GM12878 (cell line): ENCODE measurements at regions of chr19 and their contacts with region 1.

Region 1: GRCh38 chr19:10269333-10270179 is 1.4 kb upstream of the ICAM1 start:
- DNase-seq: no peak
- ATAC-seq: peak; percentile 55
- H3K4me3 ChIP-seq: peak overlapping the region; percentile 92
- H3K27ac ChIP-seq: peak overlapping the region; percentile 98
- H3K4me1 ChIP-seq: no peaks in the 10 kb centered on the region; the same call in 1 of the 2 replicates
- H3K27me3 ChIP-seq: no peaks in the 10 kb centered on the region
- CTCF ChIP-seq: peak; percentile 94 to 99 (median 97); a peak in 5 of 6 replicates
- EP300 ChIP-seq: no peak
- POLR2A ChIP-seq: no peak
- RAD21 ChIP-seq: peak; percentile 95

Region 2: GRCh38 chr19:10180463-10180862 is 89.1 kb before region 1 on chr19:
- CTCF ChIA-PET with region 1: no interaction called
- POLR2A ChIA-PET with region 1: no interaction called
- RAD21 ChIA-PET with region 1: no interaction called
- SMC1A ChIA-PET with region 1: no interaction called
- in situ Hi-C with region 1: no loop called
- intact Hi-C with region 1: no loop called
- DNase-seq: no peak
- ATAC-seq: no peak
- H3K4me3 ChIP-seq: no peak overlapping the region
- H3K27ac ChIP-seq: no peak overlapping the region
- H3K4me1 ChIP-seq: no peaks in the 10 kb centered on the region
- H3K27me3 ChIP-seq: no peaks in the 10 kb centered on the region
- CTCF ChIP-seq: no peak
- EP300 ChIP-seq: no peak
- POLR2A ChIP-seq: no peak
- RAD21 ChIP-seq: no peak

Region 3: DNA sequence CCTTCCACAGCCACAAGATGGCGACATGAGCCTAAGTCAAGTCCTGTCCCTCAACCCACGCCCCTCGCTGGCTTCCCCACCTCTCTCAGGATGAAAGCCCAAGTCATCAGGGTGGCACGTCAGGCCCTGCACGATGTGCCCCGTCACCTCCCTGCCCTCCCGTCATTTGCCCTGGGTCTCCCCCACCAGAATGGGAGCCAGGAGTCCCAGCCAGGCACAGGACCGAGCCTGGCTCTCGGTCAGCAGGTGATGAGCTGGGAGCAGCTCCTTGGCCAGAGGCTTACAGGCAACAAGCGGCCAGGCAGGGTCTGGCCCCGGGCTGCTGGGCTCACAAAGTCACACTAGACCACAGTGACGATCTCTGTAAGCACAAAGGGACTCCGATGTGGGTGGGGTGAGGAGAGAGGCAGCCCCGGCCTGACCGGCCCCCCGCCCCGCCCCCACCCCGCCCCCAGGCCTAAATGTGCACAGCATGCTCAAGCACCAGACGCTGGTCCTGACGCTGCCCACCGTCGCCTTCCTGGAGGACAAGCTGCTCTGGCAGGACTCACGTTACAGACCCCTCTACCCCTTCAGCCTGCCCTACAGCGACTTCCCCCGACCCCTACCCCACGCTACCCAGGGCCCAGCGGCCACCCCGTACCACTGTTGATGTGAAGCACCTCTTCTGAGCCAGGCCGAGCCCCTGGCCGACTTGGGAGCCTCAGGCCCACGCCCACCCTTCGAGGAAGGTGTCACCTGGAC is 10.2 kb before region 1 on chr19:
- CTCF ChIA-PET with region 1: interaction called, 93 read pairs
- POLR2A ChIA-PET with region 1: interaction called, 32 read pairs
- RAD21 ChIA-PET with region 1: interaction called, 68 read pairs
- SMC1A ChIA-PET with region 1: interaction called, 30 read pairs
- in situ Hi-C with region 1: no loop called
- intact Hi-C with region 1: no loop called
- DNase-seq: no peak
- ATAC-seq: peak; percentile 91
- H3K4me3 ChIP-seq: no peak overlapping the region
- H3K27ac ChIP-seq: 0 out of 2 replicates have a peak overlapping the region, but pooled peaks have one; percentile 27
- H3K4me1 ChIP-seq: peaks cover 11% of the 10 kb centered on the region
- H3K27me3 ChIP-seq: no peaks in the 10 kb centered on the region
- CTCF ChIP-seq: peak; percentile 71 to 75 (median 73)
- EP300 ChIP-seq: no peak
- POLR2A ChIP-seq: peak; percentile 72
- RAD21 ChIP-seq: peak; percentile 74

Region 4: DNA sequence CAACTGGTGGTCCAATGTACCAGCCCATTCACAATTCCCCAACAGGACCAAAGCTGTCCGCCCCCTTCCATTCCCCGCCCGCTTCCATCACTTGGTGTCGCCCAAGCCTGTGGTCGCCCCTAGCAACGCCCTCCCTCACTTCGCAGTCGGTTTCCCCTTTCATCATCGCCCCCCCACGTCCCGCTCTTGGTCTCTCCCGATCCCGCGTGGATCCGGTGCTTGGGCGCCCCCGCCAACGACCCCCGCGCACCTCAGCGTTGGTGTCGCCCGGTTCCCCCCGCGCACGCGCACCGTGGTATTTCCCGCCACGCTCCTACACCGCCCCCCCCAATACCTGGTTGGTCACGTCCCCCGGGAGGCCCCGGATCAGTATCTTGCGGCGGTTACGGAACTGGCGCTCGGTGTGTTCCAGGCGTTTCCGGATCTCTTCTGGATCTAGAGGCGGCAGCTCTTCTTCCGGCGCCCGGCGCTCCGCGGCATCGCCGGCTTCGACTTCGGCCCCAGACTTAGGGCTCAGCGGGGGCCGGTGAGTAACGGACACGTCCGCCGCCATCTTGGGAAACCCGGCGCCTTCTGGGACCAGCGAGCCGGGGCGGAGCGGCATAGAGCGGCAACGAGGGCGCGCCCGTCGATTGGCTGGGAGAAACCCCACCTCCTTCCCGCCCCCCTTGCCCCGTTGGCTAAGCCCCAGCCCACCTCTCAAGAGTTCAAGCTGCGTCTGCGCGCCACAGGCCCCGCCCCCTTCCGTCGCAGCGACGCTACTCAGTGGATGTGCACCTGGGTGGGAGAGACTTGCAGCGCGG is 63.6 kb after region 1 on chr19 and contains the start of gene RAVER1:
- CTCF ChIA-PET with region 1: interaction called, 5 read pairs
- POLR2A ChIA-PET with region 1: interaction called, 6 read pairs
- RAD21 ChIA-PET with region 1: interaction called, 15 read pairs
- SMC1A ChIA-PET with region 1: interaction called, 3 read pairs
- in situ Hi-C with region 1: no loop called
- intact Hi-C with region 1: loop called (anchors 5 kb)
- DNase-seq: peak; percentile 87
- ATAC-seq: peak; percentile 98
- H3K4me3 ChIP-seq: peak within 1 kb of the TSS; percentile 100
- H3K27ac ChIP-seq: peak within 1 kb of the TSS; percentile 92
- H3K4me1 ChIP-seq: peaks cover 16% of the 10 kb centered on the region
- H3K27me3 ChIP-seq: no peaks in the 10 kb centered on the region
- CTCF ChIP-seq: no peak
- EP300 ChIP-seq: peak; percentile 10 to 28; a peak in 1 of 4 replicates
- POLR2A ChIP-seq: peak; percentile 96
- RAD21 ChIP-seq: no peak
- polyA plus RNA-seq, gene RAVER1: 0.03 to 0.05 TPM

Region 5: DNA sequence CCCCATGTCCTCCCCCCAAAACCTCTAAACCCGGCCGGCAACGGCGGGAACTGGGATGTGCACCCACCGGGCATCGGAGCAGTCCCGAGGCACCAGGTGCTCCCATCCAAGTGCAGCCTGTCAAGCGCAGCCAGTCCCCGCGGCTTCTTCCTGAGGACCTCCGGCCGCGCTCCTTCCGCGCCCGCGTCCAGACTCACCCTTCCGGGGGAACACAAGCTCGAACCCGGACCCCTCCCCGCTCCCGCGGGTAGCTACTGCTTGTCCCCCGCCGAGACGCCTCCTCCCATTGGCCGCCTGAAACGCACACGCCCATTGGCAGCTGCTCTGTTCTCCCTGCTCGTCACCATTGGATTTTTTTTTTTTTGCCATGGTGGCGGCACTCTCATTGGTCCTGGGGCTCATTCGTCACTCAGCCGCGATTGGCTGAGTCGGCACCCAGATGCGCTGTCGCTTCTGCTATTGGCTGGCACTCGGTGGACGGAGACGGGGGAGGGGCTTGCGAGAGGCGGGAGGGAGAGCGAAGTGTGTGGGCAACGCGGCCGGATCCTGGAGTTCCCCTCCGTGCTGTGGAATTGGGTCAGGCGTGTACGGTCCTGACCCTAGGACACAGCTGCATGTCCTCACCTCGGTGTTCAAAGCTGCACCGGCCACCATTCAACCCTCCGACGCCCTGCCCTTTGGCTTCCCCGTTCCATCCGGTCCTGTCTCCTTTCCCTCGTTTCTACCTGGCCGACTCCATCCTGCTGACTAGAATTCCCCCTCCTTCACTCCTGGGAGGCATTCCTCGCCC is 111.0 kb after region 1 on chr19 and contains the start of gene TYK2:
- CTCF ChIA-PET with region 1: interaction called, 370 read pairs
- POLR2A ChIA-PET with region 1: interaction called, 108 read pairs
- RAD21 ChIA-PET with region 1: interaction called, 206 read pairs
- SMC1A ChIA-PET with region 1: interaction called, 158 read pairs
- in situ Hi-C with region 1: loop called (anchors 5 kb)
- intact Hi-C with region 1: loop called (anchors 2 kb)
- DNase-seq: peak; percentile 99
- ATAC-seq: peak; percentile 97
- H3K4me3 ChIP-seq: peak within 1 kb of the TSS; percentile 95
- H3K27ac ChIP-seq: peak within 1 kb of the TSS; percentile 87
- H3K4me1 ChIP-seq: peaks cover 10% of the 10 kb centered on the region
- H3K27me3 ChIP-seq: no peaks in the 10 kb centered on the region
- CTCF ChIP-seq: no peak
- EP300 ChIP-seq: peak; percentile 6 to 55; a peak in 3 of 4 replicates
- POLR2A ChIP-seq: peak; percentile 92
- RAD21 ChIP-seq: no peak
- polyA plus RNA-seq, gene TYK2: 36.4 to 66.9 TPM

Region 6: DNA sequence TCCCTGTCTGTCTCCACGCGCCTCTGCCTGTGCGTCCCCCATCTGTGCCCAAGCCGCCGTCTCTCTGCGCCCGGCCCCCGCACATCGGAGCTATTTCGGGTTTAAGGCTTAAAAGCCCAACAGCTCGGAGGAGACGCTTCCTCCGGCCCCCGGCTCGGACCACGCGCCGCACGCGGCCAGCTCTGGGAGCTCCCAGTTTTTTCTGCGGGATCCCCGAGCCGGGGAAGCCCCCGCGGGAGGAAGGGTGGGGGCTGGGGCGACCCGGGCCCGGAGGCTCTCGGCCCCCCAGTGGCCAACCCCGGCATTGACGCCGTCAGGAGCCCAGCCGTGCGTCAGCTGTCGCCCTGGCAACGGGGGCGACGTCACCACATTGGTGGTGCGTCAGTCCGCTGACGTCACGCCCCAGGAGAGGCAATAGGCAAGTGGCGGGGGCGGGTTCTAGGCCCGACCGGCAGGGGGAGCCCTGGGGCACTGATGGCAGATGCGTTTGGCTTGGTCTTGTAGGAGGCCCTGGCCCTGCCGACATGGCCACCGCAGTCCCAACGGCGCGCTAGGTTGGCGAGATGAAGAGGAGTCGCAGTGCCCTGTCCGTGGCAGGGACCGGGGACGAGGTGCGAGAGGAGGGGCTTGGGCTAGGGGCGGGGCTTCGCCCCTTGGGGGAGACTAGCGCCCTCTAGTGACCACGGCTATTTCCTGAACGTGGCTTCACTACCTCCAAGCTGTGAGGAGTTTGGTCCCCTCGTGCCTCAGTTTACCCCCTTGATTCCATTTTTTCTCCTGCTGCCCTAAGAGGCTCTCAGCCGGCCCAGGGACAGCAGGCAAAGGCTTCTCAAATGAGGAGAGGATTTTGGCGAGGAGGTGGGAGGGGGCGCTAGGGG is 147.1 kb after region 1 on chr19:
- CTCF ChIA-PET with region 1: interaction called, 13 read pairs
- POLR2A ChIA-PET with region 1: interaction called, 25 read pairs
- RAD21 ChIA-PET with region 1: interaction called, 32 read pairs
- SMC1A ChIA-PET with region 1: interaction called, 9 read pairs
- in situ Hi-C with region 1: no loop called
- intact Hi-C with region 1: no loop called
- DNase-seq: peak; percentile 60
- ATAC-seq: peak; percentile 53
- H3K4me3 ChIP-seq: peak overlapping the region; percentile 71
- H3K27ac ChIP-seq: peak overlapping the region; percentile 72
- H3K4me1 ChIP-seq: peaks cover 51% of the 10 kb centered on the region
- H3K27me3 ChIP-seq: peaks cover 0 to 16% of the 10 kb centered on the region in 2 experiments; a peak in 3 of 4 replicates
- CTCF ChIP-seq: peak; percentile 80 to 86 (median 81)
- EP300 ChIP-seq: peak in 1 of 2 experiments; percentile 74; a peak in 2 of 4 replicates
- POLR2A ChIP-seq: no peak; the same call in 1 of the 2 replicates
- RAD21 ChIP-seq: peak; percentile 41; the same call in 1 of the 2 replicates